ENCODE measurements at regions of chr20 and their contacts with region 1.

Region 1: GRCh38 chr20:1965520-1966351 is 28.1 kb downstream of the PDYN start:
- DNase-seq: peak; percentile 27 to 89 (median 70)
- ATAC-seq: peak; percentile 68 to 95 (median 88)
- H3K4me3 ChIP-seq: no peak overlapping the region
- H3K27ac ChIP-seq: no peak overlapping the region
- H3K4me1 ChIP-seq: peaks cover 0 to 3% (median 0%) of the 10 kb centered on the region in 3 donors
- H3K27me3 ChIP-seq: no peaks in the 10 kb centered on the region
- CTCF ChIP-seq: peak; percentile 79 to 91 (median 90)

Region 2: DNA sequence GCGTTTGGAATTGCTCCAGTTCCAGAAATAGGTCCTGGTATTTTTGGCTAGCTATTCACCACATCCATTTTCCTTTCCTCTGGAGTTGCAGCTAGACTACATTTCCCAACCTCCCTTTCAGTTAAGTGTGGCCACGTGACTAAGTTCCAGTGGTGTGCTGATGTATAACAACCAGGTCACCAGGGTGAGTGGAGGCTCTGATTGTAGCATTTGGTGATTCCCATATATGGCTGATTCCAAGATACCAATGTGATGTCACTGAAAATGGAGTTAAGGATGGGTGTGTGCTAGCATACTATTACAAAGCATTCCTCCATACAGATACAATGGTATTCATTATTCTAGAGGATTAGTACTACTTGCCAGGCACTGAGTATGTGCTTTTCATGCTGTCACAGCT is 86.2 kb after region 1 on chr20:
- intact Hi-C with region 1: no loop called
- DNase-seq: no peak
- ATAC-seq: no peak
- H3K4me3 ChIP-seq: no peak overlapping the region
- H3K27ac ChIP-seq: no peak overlapping the region
- H3K4me1 ChIP-seq: no peaks in the 10 kb centered on the region
- H3K27me3 ChIP-seq: peaks cover 0 to 3% (median 0%) of the 10 kb centered on the region in 4 donors
- CTCF ChIP-seq: no peak

Region 3: DNA sequence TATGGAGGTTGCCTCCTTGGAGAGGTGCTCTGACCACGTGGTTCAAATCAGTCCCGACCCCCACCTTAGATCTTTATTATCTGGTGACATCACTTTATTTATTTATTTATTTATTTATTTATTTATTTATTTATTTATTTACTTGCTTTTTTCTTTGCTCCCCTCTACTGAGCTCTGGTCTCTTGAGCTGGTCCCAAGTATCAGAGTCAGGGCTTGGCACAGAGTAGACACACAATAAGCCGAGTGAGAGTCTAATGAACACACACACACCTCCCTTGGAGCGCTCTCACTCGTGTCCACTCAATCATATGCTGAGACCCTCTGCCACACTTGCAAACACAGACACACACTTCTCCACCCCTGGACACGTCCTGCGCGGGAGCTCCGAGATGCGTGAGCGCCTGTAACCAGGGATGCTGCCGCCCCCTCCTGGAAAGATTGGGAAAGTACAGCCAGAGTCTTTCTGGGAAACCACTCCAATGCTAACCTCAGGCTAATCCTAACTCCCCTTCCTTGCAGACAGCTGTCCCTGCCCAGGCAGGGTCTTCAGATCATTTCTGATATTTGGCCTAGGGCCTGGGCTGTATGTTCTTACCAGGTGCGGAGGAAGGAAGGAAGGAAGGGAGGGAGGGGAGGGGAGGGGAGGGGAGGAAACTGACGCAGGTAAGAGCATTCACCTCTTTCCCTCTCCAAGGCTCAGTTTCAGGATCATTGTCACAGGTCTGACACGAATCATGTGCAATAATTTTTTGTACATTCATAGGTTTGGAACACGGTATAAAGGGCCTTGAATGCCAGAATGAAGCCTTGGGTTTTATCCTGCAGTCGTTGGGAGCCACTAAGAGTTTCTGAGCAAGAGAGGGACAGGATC is 206.8 kb after region 1 on chr20:
- intact Hi-C with region 1: loop called in 2 of 3 experiments (anchors 5 kb)
- DNase-seq: peak; percentile 43 to 84 (median 69)
- ATAC-seq: peak in 3 of 4 donors; percentile 91 to 92 (median 91)
- H3K4me3 ChIP-seq: no peak overlapping the region
- H3K27ac ChIP-seq: no peak overlapping the region
- H3K4me1 ChIP-seq: no peaks in the 10 kb centered on the region
- H3K27me3 ChIP-seq: no peaks in the 10 kb centered on the region
- CTCF ChIP-seq: peak; percentile 52 to 82 (median 70)

Measured in pancreas (tissue), 10 donors.